HCT116 (cell line): ENCODE measurements at regions of chr14 and their contacts with region 1.

Region 1: GRCh38 chr14:50116181-50116956 is at the start of gene VCPKMT:
- DNase-seq: peak; percentile 73
- ATAC-seq: peak; percentile 100
- H3K4me3 ChIP-seq: peak within 1 kb of the TSS; percentile 76 to 90
- H3K27ac ChIP-seq: peak within 1 kb of the TSS; percentile 50
- H3K4me1 ChIP-seq: peaks cover 7 to 11% of the 10 kb centered on the region in 2 experiments
- H3K27me3 ChIP-seq: no peaks in the 10 kb centered on the region
- CTCF ChIP-seq: no peak
- POLR2A ChIP-seq: peak; percentile 78
- RAD21 ChIP-seq: 0 out of 2 replicates have a peak, but pooled peaks have one; percentile 11
- total RNA-seq, gene VCPKMT: 9.7 TPM

Region 2: GRCh38 chr14:49620182-49621113 is 495.9 kb before region 1 on chr14 and contains the starts of genes MGAT2 and RPL36AL:
- CTCF ChIA-PET with region 1: no interaction called
- POLR2A ChIA-PET with region 1: no interaction called
- RAD21 ChIA-PET with region 1: no interaction called
- intact Hi-C with region 1: loop called (anchors 5 kb)
- DNase-seq: peak; percentile 95
- ATAC-seq: peak; percentile 97
- H3K4me3 ChIP-seq: peak within 1 kb of the TSS; percentile 82 to 96
- H3K27ac ChIP-seq: peak within 1 kb of the TSS; percentile 86
- H3K4me1 ChIP-seq: peaks cover 8 to 41% of the 10 kb centered on the region in 2 experiments; a peak in 3 of 4 replicates
- H3K27me3 ChIP-seq: no peaks in the 10 kb centered on the region
- CTCF ChIP-seq: peak in 2 of 3 experiments; percentile 18 to 26; a peak in 1 of 6 replicates
- POLR2A ChIP-seq: peak; percentile 88
- RAD21 ChIP-seq: no peak
- total RNA-seq, gene MGAT2: 22.9 TPM
- total RNA-seq, gene RPL36AL: 212 TPM

Region 3: GRCh38 chr14:50128225-50128624 is 11.9 kb after region 1 on chr14:
- CTCF ChIA-PET with region 1: no interaction called
- POLR2A ChIA-PET with region 1: no interaction called
- RAD21 ChIA-PET with region 1: no interaction called
- intact Hi-C with region 1: no loop called
- DNase-seq: no peak
- ATAC-seq: no peak
- H3K4me3 ChIP-seq: no peak overlapping the region
- H3K27ac ChIP-seq: no peak overlapping the region
- H3K4me1 ChIP-seq: no peaks in the 10 kb centered on the region
- H3K27me3 ChIP-seq: no peaks in the 10 kb centered on the region
- CTCF ChIP-seq: no peak
- POLR2A ChIP-seq: no peak
- RAD21 ChIP-seq: no peak